ENCODE measurements at regions of chr2 and their contacts with region 1.

Region 1: GRCh38 chr2:37982147-37982582 is 57.1 kb downstream of the RMDN2 start:
- DNase-seq: peak; percentile 31
- H3K4me3 Mint-ChIP-seq: no peak overlapping the region
- H3K27ac Mint-ChIP-seq: no peak overlapping the region
- H3K4me1 Mint-ChIP-seq: peaks cover 9% of the 10 kb centered on the region
- H3K27me3 Mint-ChIP-seq: peaks cover 22% of the 10 kb centered on the region

Region 2: DNA sequence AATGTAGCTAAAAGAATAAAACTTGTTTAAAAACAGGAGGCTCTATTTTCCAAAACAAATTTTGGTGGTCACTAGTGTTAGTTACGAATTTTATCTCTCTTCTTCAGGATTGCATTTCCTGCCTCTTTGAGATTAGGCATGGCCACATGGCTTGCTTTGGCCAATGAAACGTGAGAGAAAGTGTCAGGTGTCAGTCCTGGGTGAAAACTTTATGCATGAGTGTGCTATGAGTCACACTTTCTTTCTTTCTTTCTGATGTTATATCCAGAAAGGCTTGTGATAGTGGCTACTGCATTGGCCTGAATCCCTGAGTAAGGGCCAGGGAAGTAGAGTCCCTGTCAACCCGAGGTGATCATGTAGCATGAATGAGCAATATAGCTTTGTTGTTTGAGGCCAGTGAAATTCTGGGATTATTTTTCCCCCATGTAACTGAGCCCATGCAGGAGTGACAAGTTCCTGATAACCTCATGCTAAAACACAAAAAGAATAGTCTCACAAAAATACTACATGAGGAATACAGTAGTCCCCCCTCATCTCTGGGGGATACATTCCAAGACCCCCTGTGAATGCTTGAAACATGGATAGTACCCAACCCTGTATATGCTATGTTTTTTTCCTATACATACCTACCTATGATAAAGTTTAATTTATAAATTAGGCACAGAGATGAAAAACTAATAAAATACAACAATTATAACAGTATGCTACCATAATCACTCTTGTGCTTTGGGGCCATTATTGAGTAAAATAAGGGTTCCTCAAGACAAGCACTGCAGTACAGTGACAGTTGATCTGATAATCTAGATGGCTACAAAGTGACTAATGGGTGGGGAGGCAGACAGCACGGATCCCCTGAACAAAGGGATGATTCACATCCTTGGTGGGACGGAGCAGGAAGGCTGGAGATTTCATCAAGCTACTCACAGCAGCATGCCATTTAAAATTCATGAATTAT is 420.3 kb before region 1 on chr2:
- intact Hi-C with region 1: no loop called
- DNase-seq: no peak
- H3K4me3 Mint-ChIP-seq: no peak overlapping the region
- H3K27ac Mint-ChIP-seq: peak overlapping the region; percentile 19
- H3K4me1 Mint-ChIP-seq: peaks cover 18% of the 10 kb centered on the region
- H3K27me3 Mint-ChIP-seq: no peaks in the 10 kb centered on the region

Region 3: DNA sequence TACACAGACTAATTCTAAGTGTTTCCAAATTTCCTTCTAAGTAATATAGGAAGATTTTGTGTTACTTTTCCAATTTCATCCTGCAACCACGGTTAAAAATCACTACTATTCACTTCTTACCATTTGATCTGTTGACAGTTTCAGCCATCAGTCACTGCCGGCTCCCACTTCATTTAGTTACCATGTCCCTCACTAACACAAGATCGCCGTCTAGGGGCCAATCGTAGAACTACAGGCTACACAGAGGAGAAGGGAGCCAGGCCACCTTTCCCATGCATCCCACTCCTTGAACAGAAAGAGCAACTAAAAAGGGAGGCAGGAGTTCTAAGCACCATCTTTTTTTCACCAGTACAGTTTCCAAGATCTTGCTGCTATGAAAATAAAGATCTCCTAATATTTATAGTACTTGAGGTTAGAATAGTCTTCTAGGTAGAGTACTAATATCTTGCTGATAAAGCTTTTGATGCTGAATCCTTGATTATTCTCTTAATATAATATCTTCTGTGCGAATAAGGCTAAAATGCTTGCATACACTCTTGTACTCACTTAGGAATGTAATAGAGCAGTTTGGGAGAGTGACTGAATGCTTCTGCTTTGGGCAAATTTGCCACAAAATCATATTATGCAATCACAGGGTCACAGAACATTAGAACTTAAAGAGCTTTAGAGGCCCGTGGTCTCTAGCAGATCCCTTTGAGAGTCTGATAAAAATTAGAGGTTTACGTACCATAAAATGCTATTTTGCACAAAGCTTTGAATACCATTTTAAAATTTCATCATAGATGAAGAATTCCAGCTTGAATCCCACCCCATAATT is 133.3 kb after region 1 on chr2:
- intact Hi-C with region 1: loop called (anchors 1 kb)
- DNase-seq: peak; percentile 59
- H3K4me3 Mint-ChIP-seq: no peak overlapping the region
- H3K27ac Mint-ChIP-seq: no peak overlapping the region
- H3K4me1 Mint-ChIP-seq: peaks cover 10% of the 10 kb centered on the region
- H3K27me3 Mint-ChIP-seq: peaks cover 23% of the 10 kb centered on the region

Region 4: DNA sequence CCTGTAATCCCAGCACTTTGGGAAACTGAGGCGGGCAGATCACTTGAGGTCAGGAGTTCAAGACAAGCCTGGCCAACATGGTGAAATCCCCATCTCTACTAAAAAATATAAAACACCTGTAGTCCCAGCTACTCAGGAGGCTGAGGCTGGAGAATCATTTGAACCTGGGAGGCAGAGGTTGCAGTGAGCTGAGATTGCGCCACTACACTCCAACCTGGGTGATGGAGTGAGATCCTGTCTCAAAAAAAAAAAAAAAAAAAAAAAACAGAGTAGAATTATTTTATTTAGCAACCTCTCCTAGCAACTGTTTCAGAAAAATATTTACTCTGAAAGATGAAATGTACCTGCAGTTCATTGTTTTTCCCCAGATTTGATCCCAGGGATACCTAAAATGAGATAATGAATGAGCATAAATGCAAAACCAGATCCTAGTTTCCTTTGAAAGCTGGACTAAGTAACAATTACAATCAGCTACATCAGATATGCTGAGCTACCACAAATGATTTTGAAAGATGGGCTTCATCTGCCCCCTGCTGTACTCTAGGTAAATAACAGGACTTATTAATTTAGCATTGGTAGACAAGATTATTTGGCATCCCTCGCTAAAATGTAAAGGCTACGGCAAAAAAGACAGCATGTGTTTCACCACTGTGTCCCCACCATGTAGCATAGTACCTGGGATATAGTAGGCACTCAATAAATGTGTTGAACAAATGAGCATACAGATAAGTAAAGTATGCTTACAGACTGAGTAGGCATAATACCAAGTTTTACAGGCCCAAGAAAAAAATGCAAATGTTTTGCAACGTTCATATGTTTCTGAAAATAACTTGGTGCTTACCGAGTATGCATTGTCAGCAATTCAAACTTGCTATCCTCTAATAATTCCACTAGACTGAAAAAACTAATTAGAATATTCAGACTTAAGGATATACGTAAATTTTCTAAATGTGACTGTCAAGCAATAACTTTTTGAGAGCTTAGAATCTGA is 292.4 kb after region 1 on chr2:
- intact Hi-C with region 1: loop called (anchors 1 kb)
- DNase-seq: no peak
- H3K4me3 Mint-ChIP-seq: no peak overlapping the region
- H3K27ac Mint-ChIP-seq: no peak overlapping the region
- H3K4me1 Mint-ChIP-seq: peaks cover 12% of the 10 kb centered on the region
- H3K27me3 Mint-ChIP-seq: peaks cover 5% of the 10 kb centered on the region

Region 5: DNA sequence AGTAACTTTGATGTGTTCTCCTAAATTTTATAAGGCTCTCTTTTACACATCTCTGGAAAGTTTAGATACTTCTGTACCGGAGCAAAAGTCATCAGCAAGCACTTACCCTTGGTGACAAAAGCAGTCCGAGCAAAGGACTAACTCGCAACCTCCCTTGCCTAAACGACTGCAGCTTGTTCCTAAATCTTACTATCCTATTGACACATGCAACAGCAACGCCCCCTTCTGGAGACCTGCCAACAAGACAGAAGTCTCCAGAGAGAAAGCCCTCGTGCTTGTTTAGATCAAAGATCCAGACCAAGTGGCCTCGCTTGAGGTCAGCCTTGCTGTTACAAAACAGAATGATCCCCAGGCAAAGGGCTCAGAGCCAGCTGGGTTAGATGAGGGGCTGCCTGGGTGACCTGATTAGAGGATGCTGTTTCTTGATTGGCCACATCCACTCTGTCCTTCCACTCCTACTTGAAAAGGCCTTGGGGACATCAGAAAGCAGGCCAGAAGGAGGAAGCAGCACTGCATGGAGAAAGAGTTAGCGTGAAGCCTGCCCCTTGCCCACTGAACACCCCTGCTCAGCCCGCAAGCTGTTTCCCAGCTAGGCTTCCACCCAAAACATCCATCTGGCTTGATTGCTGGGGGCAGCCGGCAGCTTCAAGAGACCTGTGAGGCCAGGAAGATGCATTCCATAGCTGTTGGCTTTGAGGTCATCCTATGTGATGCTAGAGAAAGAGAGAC is 526.3 kb after region 1 on chr2:
- intact Hi-C with region 1: loop called (anchors 5 kb)
- DNase-seq: peak; percentile 63
- H3K4me3 Mint-ChIP-seq: no peak overlapping the region
- H3K27ac Mint-ChIP-seq: no peak overlapping the region
- H3K4me1 Mint-ChIP-seq: peaks cover 10% of the 10 kb centered on the region
- H3K27me3 Mint-ChIP-seq: peaks cover 11% of the 10 kb centered on the region